Activated CD8-positive, alpha-beta T cell treated with anti-CD3 and anti-CD28 coated beads, Interleukin-2, amount 10 ng/mL, durations not matched to agents 7 days and 5 days (primary cell): ENCODE measurements at regions of chrX and their contacts with region 1.

Region 1: GRCh38 chrX:55717521-55718497 is at the start of gene RRAGB:
- DNase-seq: peak; percentile 94
- ATAC-seq: peak; percentile 98
- H3K4me3 Mint-ChIP-seq: peak within 1 kb of the TSS; percentile 85
- H3K27ac Mint-ChIP-seq: peak within 1 kb of the TSS; percentile 95
- H3K4me1 Mint-ChIP-seq: peaks cover 24% of the 10 kb centered on the region
- H3K27me3 Mint-ChIP-seq: no peaks in the 10 kb centered on the region
- total RNA-seq, gene RRAGB: 7.7 to 8.3 TPM

Region 2: DNA sequence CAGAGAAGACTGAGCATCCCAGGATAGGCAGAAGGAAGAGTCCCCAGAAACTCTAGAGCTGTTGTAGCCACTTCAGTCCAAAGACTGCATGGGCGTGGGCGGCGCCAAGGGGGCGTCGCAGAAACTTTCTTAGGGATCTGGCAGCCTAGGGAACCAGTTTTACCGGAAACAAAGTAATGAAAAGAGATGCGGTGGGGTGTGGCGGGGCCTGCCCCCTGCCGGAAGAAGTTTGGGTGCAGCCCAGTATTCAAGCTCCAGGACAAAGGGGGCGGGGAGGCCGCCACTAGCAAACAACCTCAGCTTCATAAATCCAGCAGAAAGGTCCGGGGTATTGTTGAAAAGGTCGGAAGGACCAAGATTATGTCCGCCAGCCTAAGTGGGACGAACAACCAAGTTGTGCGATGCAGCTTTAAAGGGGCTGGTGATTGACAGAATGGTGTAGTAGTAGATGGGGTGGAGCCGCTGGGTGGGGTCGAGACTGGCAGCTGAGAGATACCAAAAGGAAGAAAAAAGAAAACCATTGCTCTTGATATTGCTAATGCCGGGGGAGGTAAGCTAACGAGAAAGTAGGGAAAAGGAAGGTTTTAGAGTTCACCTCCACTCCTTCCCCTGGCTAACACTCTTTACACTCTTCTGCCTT is 190.3 kb after region 1 on chrX:
- CTCF ChIA-PET with region 1: interaction called, 14 read pairs
- POLR2A ChIA-PET with region 1: no interaction called
- DNase-seq: peak; percentile 69
- ATAC-seq: peak; percentile 74
- H3K4me3 Mint-ChIP-seq: peak overlapping the region; percentile 88
- H3K27ac Mint-ChIP-seq: peak overlapping the region; percentile 86
- H3K4me1 Mint-ChIP-seq: peaks cover 16% of the 10 kb centered on the region
- H3K27me3 Mint-ChIP-seq: peaks cover 2% of the 10 kb centered on the region

Region 3: DNA sequence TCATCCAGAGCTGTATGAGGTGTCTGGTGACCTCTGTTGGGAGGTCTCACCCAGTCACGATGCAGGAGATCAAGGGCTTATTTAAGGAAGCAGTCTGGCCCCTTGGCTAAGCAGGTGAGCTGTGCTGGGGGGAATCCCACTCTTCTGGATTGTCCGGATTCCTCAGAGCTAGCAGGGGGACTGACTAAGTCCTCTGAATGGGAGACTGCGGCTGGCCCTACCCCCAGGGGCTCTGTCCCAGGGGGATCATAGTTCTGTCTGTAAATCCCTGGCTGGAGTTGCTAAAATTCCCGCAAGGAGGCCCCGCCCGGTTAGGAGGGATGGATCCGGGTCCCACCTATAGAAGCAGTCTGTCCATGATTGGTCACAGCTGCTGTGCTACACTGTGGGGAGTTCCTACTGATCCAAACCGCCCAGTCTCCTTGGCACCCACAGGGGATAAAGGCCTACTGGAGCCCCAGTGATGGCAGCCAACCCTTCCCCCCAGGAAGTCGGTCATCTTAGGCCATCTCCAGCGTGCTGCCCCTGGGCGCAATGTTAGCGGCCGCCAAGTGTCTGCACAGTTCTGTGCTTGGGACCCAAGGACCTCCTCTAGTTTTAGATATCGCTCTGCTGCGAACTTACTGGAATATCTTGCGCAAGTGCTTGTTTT is 396.1 kb after region 1 on chrX:
- CTCF ChIA-PET with region 1: no interaction called
- POLR2A ChIA-PET with region 1: no interaction called
- DNase-seq: no peak
- ATAC-seq: no peak
- H3K4me3 Mint-ChIP-seq: no peak overlapping the region
- H3K27ac Mint-ChIP-seq: no peak overlapping the region
- H3K4me1 Mint-ChIP-seq: no peaks in the 10 kb centered on the region
- H3K27me3 Mint-ChIP-seq: no peaks in the 10 kb centered on the region